Activated T-helper 2 cell treated with anti-CD3 and anti-CD28 coated beads, Interferon-gamma antibody, Interleukin-2, Interleukin-4, amounts not matched to agents 10 μg/mL and 5 μg/mL and 100 μg/mL, durations not matched to agents 14 hours and 24 hours and 36 hours (primary cell): ENCODE measurements at regions of chr6 and their contacts with region 1.

Region 1: GRCh38 chr6:127186889-127187288 is 68.4 kb downstream of the RSPO3 start:
- DNase-seq: peak; percentile 33
- H3K4me3 Mint-ChIP-seq: no peak overlapping the region
- H3K27ac Mint-ChIP-seq: no peak overlapping the region
- H3K4me1 Mint-ChIP-seq: no peaks in the 10 kb centered on the region
- H3K27me3 Mint-ChIP-seq: peaks cover 23% of the 10 kb centered on the region

Region 2: DNA sequence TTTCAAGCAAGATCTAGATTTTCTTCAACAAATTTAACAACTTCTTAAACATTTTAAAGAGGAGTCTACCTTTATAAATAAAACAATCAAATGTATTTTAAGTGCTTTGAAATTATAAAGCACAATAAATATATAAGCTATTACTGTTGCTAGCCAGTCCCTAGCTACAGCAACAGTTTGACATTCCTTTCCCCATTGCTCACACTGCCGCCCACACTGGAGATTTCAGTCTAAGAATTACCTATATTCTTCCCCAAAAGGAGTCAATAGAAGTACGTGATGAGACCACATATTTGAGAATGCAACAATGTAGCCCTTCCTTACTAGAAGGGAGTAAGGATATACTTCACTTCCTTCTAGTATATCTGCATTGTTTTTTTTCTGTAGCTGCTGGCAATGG is 14.4 kb after region 1 on chr6:
- intact Hi-C with region 1: no loop called
- DNase-seq: no peak
- H3K4me3 Mint-ChIP-seq: no peak overlapping the region
- H3K27ac Mint-ChIP-seq: no peak overlapping the region
- H3K4me1 Mint-ChIP-seq: no peaks in the 10 kb centered on the region
- H3K27me3 Mint-ChIP-seq: peaks cover 14% of the 10 kb centered on the region

Region 3: DNA sequence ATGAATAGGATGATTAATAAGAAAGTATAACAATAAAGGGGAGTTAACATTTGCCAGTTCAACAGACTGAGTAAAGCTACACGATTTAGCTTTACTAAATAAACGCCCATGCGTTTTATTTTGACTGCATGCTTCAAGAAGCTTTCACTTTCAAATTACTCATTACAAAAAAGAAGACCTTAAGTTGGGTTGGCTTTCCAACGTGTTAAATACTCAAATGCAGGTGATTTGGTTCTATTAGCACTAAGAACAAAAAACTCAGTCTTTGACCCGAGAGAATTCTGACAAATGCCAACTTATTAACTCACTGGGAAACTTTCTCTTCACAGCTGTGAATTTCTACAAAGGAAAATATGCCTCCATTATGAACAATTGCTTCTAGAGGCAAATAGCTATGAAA is 104.6 kb after region 1 on chr6:
- intact Hi-C with region 1: no loop called
- DNase-seq: no peak
- H3K4me3 Mint-ChIP-seq: no peak overlapping the region
- H3K27ac Mint-ChIP-seq: peak overlapping the region; percentile 48
- H3K4me1 Mint-ChIP-seq: peaks cover 40% of the 10 kb centered on the region
- H3K27me3 Mint-ChIP-seq: no peaks in the 10 kb centered on the region

Region 4: GRCh38 chr6:127539272-127539671 is 352.4 kb after region 1 on chr6:
- intact Hi-C with region 1: loop called (anchors 2 kb)
- DNase-seq: no peak
- H3K4me3 Mint-ChIP-seq: no peak overlapping the region
- H3K27ac Mint-ChIP-seq: no peak overlapping the region
- H3K4me1 Mint-ChIP-seq: peaks cover 2% of the 10 kb centered on the region
- H3K27me3 Mint-ChIP-seq: peaks cover 22% of the 10 kb centered on the region